ENCODE measurements at regions of chr19 and their contacts with region 1.

Region 1: GRCh38 chr19:18388100-18388959 is 2.4 kb downstream of the GDF15 start:
- DNase-seq: peak; percentile 69 to 74
- H3K4me3 ChIP-seq: peak overlapping the region; percentile 91
- H3K27ac ChIP-seq: peak overlapping the region; percentile 73; the same call in 1 of the 2 replicates
- H3K4me1 ChIP-seq: peaks cover 15% of the 10 kb centered on the region
- H3K27me3 ChIP-seq: no peaks in the 10 kb centered on the region
- CTCF ChIP-seq: peak; percentile 99

Region 2: GRCh38 chr19:18349524-18350128 is 38.7 kb before region 1 on chr19:
- CTCF ChIA-PET with region 1: interaction called, 5 read pairs
- POLR2A ChIA-PET with region 1: no interaction called
- intact Hi-C with region 1: loop called (anchors 1 kb)
- DNase-seq: peak; percentile 63
- H3K4me3 ChIP-seq: no peak overlapping the region
- H3K27ac ChIP-seq: no peak overlapping the region
- H3K4me1 ChIP-seq: peaks cover 10% of the 10 kb centered on the region; the same call in 1 of the 2 replicates
- H3K27me3 ChIP-seq: no peaks in the 10 kb centered on the region
- CTCF ChIP-seq: peak; percentile 93

Region 3: DNA sequence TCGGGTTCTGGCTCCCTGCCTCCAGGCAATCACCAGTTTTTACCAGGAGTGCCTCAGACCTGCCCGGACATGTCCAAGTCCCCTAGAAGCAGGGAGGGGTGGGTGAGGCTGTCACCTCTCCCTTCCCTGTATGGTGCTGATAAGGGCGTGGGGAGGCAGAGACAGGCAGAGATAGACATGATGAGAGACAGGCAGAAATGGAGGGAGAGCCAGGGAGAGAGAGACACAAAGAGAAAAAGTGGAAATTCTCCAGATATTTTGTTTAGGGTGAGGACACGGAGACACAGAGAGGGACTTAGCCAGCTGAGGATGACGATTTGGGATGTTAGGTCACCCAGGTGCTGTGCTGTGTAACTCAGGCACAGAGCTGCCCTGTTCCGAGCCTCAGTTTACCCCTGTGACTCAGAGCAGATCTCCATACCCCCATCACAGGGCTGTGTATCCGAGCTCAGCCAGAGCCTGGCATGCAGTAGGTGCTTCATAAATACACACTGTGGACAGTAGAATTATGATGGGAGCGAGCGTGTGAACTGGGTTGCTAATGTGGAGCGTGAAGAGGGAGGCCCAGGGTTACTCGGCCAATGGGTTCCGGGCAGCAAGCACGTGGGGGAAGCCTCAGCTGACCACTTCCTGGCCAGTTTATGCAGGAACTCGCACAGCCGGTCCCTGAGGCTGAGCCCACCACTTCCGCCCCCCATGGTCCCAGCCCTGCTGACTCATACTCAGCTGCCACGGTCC is 14.3 kb before region 1 on chr19:
- CTCF ChIA-PET with region 1: interaction called, 12 read pairs
- POLR2A ChIA-PET with region 1: no interaction called
- intact Hi-C with region 1: no loop called
- DNase-seq: peak; percentile 93 to 98
- H3K4me3 ChIP-seq: peak overlapping the region; percentile 7; the same call in 1 of the 2 replicates
- H3K27ac ChIP-seq: peak overlapping the region; percentile 98
- H3K4me1 ChIP-seq: peaks cover 58% of the 10 kb centered on the region
- H3K27me3 ChIP-seq: no peaks in the 10 kb centered on the region
- CTCF ChIP-seq: no peak

Region 4: DNA sequence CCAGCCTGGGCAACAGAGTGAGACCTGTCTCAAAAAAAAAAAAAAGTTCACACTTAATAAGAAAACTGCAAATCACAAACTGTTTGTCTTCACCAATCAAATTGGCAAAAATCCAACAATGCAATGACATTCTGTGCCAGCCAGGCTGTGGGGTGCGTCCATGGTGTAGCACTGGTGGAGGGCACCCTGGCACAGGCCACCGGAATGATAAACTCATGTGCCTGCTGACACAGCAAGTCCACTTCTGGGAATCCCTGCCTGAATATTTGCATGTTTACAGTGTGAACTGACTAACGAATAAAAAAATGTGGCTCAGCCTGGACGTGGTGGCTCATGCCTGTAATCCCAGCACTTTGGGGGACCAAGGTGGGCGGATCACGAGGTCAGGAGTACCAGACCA is 10.7 kb after region 1 on chr19:
- CTCF ChIA-PET with region 1: interaction called, 7 read pairs
- POLR2A ChIA-PET with region 1: interaction called, 13 read pairs
- intact Hi-C with region 1: no loop called
- DNase-seq: peak; percentile 66
- H3K4me3 ChIP-seq: no peak overlapping the region
- H3K27ac ChIP-seq: peak overlapping the region; percentile 17; the same call in 1 of the 2 replicates
- H3K4me1 ChIP-seq: peaks cover 25% of the 10 kb centered on the region
- H3K27me3 ChIP-seq: no peaks in the 10 kb centered on the region
- CTCF ChIP-seq: no peak

Region 5: GRCh38 chr19:19033426-19034203 is 645.3 kb after region 1 on chr19 and contains the starts of genes ARMC6 and SUGP2:
- CTCF ChIA-PET with region 1: interaction called, 14 read pairs
- POLR2A ChIA-PET with region 1: no interaction called
- intact Hi-C with region 1: no loop called
- DNase-seq: peak; percentile 69 to 88
- H3K4me3 ChIP-seq: peak within 1 kb of the TSS; percentile 70
- H3K27ac ChIP-seq: peak within 1 kb of the TSS; percentile 67
- H3K4me1 ChIP-seq: peaks cover 13% of the 10 kb centered on the region; the same call in 1 of the 2 replicates
- H3K27me3 ChIP-seq: no peaks in the 10 kb centered on the region
- CTCF ChIP-seq: no peak
- total RNA-seq, gene ARMC6: 23.5 and 28.8 TPM in 2 replicates
- total RNA-seq, gene SUGP2: 60.0 and 73.1 TPM in 2 replicates

Measured in PC-9 (cell line).